Sigmoid colon (tissue), 7 donors: ENCODE measurements at regions of chr15 and their contacts with region 1.

Region 1: GRCh38 chr15:90560229-90560776 is 30.6 kb downstream of the CRTC3 start:
- DNase-seq: peak; percentile 89
- H3K4me3 ChIP-seq: no peak overlapping the region
- H3K27ac ChIP-seq: peak overlapping the region; percentile 77 to 92 (median 83)
- H3K4me1 ChIP-seq: peaks cover 0 to 84% (median 83%) of the 10 kb centered on the region in 4 donors
- H3K27me3 ChIP-seq: no peaks in the 10 kb centered on the region
- CTCF ChIP-seq: no peak
- EP300 ChIP-seq: peak in 2 of 4 donors; percentile 53 to 83
- POLR2A ChIP-seq: no peak

Region 2: DNA sequence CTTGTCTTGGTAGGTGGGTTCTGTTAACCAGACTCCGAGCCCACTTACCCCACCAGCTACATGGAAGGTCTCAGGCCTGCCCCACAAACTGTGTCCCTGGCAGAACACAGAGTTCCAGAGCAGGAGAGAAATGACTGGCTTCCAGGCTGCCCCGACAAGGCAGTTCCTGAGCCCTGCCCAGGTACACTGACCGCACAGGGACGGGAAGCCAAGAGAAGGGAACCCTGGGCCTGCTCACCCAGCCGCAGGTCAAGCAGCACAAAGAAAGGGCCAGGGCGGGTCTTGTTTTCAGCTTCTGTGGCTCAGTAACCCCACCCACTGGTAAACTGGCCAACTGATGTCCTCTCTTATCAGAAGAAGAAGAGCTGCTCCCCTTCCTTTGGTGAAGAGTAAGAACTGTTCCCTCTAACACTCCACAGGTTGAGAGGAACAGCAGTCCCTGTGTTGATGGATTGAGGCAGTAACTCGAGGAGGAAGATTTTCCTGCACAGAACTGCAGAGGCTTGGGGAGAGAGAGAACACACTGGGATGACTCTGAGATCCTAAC is 37.8 kb after region 1 on chr15:
- intact Hi-C with region 1: loop called (anchors 5 kb)
- DNase-seq: peak; percentile 74
- H3K4me3 ChIP-seq: no peak overlapping the region
- H3K27ac ChIP-seq: peak overlapping the region; percentile 61 to 69 (median 66)
- H3K4me1 ChIP-seq: peaks cover 0 to 55% (median 46%) of the 10 kb centered on the region in 4 donors
- H3K27me3 ChIP-seq: no peaks in the 10 kb centered on the region
- CTCF ChIP-seq: no peak
- EP300 ChIP-seq: no peak
- POLR2A ChIP-seq: no peak

Region 3: DNA sequence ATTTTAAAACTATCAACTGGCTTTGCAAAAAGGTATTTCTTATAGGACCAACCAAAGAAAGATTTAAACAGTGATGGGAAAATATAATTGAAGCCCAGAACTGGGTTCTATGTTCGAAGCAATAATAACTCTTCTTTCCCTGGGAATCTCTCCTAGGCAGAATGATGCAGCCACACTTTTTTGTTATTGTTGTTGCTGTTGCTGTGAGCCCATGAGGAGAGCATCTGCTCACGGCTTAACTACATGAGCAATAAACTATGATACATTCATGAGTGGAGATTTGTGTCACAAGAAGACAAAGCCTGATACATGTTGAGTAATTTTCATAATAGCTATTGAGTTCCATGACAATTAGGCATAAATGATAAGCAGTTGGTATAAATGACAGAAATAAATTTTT is 49.9 kb after region 1 on chr15:
- intact Hi-C with region 1: loop called (anchors 5 kb)
- DNase-seq: no peak
- H3K4me3 ChIP-seq: no peak overlapping the region
- H3K27ac ChIP-seq: peak overlapping the region; percentile 65 to 79 (median 70)
- H3K4me1 ChIP-seq: peaks cover 0 to 33% (median 32%) of the 10 kb centered on the region in 4 donors
- H3K27me3 ChIP-seq: no peaks in the 10 kb centered on the region
- CTCF ChIP-seq: no peak
- EP300 ChIP-seq: no peak
- POLR2A ChIP-seq: no peak

Region 4: GRCh38 chr15:90886041-90886614 is 325.8 kb after region 1 on chr15:
- intact Hi-C with region 1: no loop called
- DNase-seq: peak; percentile 89
- H3K4me3 ChIP-seq: peak overlapping the region in 1 of 4 donors; percentile 71
- H3K27ac ChIP-seq: peak overlapping the region; percentile 87 to 92 (median 90)
- H3K4me1 ChIP-seq: peaks cover 0 to 41% (median 35%) of the 10 kb centered on the region in 4 donors
- H3K27me3 ChIP-seq: no peaks in the 10 kb centered on the region
- CTCF ChIP-seq: peak; percentile 95 to 98 (median 96)
- EP300 ChIP-seq: no peak
- POLR2A ChIP-seq: no peak